ENCODE measurements at regions of chr2 and their contacts with region 1.

Region 1: DNA sequence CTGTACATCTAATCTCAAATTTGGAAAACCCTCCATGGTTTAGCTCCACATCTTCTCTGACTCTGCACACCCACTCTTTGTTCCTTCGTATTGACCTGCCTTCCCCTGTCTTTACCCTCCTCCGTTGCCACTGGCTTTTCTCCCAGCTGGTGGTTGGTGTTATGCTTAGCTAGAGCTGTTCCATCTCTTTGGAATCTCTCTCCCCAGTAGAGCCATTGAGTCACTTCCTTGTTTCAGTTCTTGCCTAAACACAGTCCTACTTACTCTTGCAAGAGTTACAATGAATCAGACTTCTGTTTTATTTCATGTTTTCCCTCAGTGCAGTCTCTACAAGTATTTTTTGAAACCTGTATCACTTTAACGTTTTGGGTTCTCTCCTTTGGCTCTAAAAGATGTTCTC is 263.9 kb downstream of the LTBP1 start:
- DNase-seq: no peak
- H3K4me3 ChIP-seq: no peak overlapping the region
- H3K27ac ChIP-seq: peak overlapping the region; percentile 45 to 78 (median 70)
- H3K4me1 ChIP-seq: peaks cover 0 to 74% (median 41%) of the 10 kb centered on the region in 4 donors
- H3K27me3 ChIP-seq: no peaks in the 10 kb centered on the region
- CTCF ChIP-seq: no peak
- EP300 ChIP-seq: no peak
- POLR2A ChIP-seq: no peak

Region 2: GRCh38 chr2:33059471-33060156 is 151.0 kb before region 1 on chr2:
- intact Hi-C with region 1: loop called (anchors 5 kb)
- DNase-seq: no peak
- H3K4me3 ChIP-seq: peak overlapping the region in 1 of 4 donors; percentile 6
- H3K27ac ChIP-seq: peak overlapping the region; percentile 68 to 79 (median 76)
- H3K4me1 ChIP-seq: peaks cover 0 to 35% (median 29%) of the 10 kb centered on the region in 4 donors
- H3K27me3 ChIP-seq: no peaks in the 10 kb centered on the region
- CTCF ChIP-seq: no peak
- EP300 ChIP-seq: no peak
- POLR2A ChIP-seq: no peak

Measured in sigmoid colon (tissue), 7 donors.